Transverse colon (tissue), 4 donors: ENCODE measurements at regions of chr16 and their contacts with region 1.

Region 1: GRCh38 chr16:66872943-66873684 is 7.2 kb upstream of the PDP2 start:
- DNase-seq: peak; percentile 94
- H3K4me3 ChIP-seq: peak overlapping the region in 3 of 4 donors; percentile 19 to 43 (median 28)
- H3K27ac ChIP-seq: peak overlapping the region; percentile 84 to 86 (median 85)
- H3K4me1 ChIP-seq: peaks cover 7 to 36% (median 26%) of the 10 kb centered on the region in 4 donors
- H3K27me3 ChIP-seq: no peaks in the 10 kb centered on the region
- CTCF ChIP-seq: peak; percentile 84 to 95 (median 93)
- EP300 ChIP-seq: no peak
- POLR2A ChIP-seq: peak; percentile 11

Region 2: GRCh38 chr16:66608241-66609138 is 264.6 kb before region 1 on chr16:
- in situ Hi-C with region 1: no loop called
- intact Hi-C with region 1: loop called (anchors 5 kb)
- DNase-seq: peak; percentile 86
- H3K4me3 ChIP-seq: no peak overlapping the region
- H3K27ac ChIP-seq: peak overlapping the region in 1 of 4 donors; percentile 1
- H3K4me1 ChIP-seq: peaks cover 0 to 39% (median 22%) of the 10 kb centered on the region in 4 donors
- H3K27me3 ChIP-seq: peaks cover 17% of the 10 kb centered on the region
- CTCF ChIP-seq: peak; percentile 78 to 91 (median 86)
- EP300 ChIP-seq: no peak
- POLR2A ChIP-seq: no peak